ENCODE measurements at regions of chr16 and their contacts with region 1.

Region 1: DNA sequence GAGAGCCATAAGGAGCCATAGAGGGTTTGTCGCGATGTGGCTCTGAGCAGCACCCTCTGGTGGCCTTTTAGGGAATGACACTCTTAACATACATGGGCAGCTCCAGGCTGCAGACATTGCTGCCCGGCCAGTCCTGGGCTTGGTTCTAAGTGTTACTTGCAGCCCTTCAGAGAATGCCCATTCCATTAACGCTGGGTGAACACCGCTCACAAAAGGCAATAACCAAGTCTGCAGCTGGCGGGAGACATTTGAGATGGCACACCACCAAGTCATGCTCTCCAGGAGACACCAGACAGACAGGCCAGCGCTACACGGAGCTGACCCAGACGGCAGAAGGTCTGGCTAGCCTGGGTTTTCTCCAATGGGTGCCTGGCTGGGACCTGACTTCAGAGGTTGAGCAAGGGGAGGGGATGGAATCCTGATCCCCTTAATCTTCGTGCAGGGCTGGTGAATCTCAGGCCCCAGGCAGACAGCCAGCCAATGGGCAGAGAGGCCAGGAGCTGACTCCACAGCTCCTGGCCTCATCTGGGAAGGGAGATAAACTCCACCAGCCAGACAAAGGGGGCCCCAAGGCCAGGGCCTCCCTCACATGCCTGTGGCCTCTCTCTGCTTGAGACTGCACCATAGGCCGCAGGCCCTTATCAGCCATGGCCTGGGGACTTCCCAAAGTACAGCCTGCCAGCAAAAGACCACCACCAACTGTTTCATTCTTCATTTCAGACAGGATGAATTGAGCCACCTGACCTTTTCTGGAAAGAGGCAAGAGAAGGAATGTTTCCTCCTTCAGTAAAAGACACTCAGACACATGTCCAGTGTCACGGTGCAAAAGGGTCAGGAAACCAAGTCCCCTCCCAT is 58.8 kb downstream of the ZDHHC7 start:
- DNase-seq: peak; percentile 69 to 76 (median 73)
- H3K4me3 ChIP-seq: no peak overlapping the region
- H3K4me3 Mint-ChIP-seq: no peak overlapping the region
- H3K27ac ChIP-seq: no peak overlapping the region
- H3K27ac Mint-ChIP-seq: peak overlapping the region in 4 of 7 donors; percentile 25 to 77 (median 58)
- H3K4me1 ChIP-seq: peaks cover 13% of the 10 kb centered on the region
- H3K4me1 Mint-ChIP-seq: peaks cover 0 to 6% (median 5%) of the 10 kb centered on the region in 4 donors
- H3K27me3 ChIP-seq: no peaks in the 10 kb centered on the region
- H3K27me3 Mint-ChIP-seq: peaks cover 0 to 6% of the 10 kb centered on the region in 2 donors

Region 2: GRCh38 chr16:84738255-84739038 is 214.1 kb before region 1 on chr16:
- CTCF ChIA-PET with region 1: interaction called, 24 read pairs
- POLR2A ChIA-PET with region 1: no interaction called
- intact Hi-C with region 1: loop called (anchors 1 kb)
- DNase-seq: peak; percentile 75 to 82 (median 78)
- H3K4me3 ChIP-seq: no peak overlapping the region
- H3K4me3 Mint-ChIP-seq: peak overlapping the region; percentile 27 to 80 (median 64)
- H3K27ac ChIP-seq: no peak overlapping the region
- H3K27ac Mint-ChIP-seq: peak overlapping the region; percentile 2 to 87 (median 80)
- H3K4me1 ChIP-seq: peaks cover 33% of the 10 kb centered on the region
- H3K4me1 Mint-ChIP-seq: peaks cover 36 to 53% (median 43%) of the 10 kb centered on the region in 4 donors
- H3K27me3 ChIP-seq: no peaks in the 10 kb centered on the region
- H3K27me3 Mint-ChIP-seq: no peaks in the 10 kb centered on the region

Region 3: DNA sequence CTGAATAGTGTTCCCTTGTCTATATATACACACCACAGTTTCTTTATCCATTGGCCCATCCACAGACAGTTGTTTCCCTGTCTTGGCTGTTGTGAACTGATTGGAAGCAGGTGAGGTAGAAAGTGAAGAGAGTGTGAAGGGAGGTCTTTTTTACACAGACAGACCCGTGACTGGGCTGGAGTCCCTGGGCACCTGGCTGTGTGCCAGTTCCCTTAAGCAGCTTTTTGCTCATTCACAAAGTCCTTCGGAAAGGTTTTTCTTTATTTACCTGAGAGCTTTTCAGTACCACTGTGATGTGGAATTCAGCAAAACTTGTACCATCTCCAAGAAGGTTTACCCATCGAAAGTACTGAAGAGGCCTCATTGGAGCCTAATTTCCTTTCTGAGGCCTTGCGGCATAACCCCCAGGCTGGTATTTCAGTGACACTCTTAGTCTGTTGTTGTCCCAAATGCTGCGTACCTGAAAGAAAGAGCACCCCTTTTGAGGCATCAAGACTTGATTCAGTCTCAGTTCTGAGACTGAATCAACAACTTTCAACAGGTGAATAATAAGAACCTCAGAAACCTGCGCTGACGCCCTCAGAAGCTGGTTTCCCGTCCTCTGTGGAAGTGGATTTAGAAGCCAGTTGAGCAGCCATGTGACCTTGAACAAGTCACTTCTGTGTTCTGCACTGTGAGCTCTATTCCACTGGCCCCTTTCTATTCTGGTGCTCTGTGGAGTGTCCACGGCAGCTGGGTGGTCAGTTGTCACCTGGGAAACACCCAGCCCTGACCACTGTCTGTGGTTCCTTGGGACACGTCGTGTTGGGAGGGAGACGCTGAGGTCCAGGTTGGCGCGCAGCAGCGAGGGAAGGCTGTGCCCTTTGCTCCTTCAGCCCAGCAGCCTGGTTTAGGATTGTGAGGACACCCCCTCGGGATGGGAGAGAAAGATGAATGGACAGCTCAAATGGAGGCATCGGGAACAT is 186.7 kb before region 1 on chr16:
- CTCF ChIA-PET with region 1: interaction called, 32 read pairs
- POLR2A ChIA-PET with region 1: no interaction called
- intact Hi-C with region 1: no loop called
- DNase-seq: peak; percentile 36 to 65 (median 55)
- H3K4me3 ChIP-seq: no peak overlapping the region
- H3K4me3 Mint-ChIP-seq: peak overlapping the region; percentile 43 to 90 (median 80)
- H3K27ac ChIP-seq: peak overlapping the region; percentile 44
- H3K27ac Mint-ChIP-seq: peak overlapping the region; percentile 85 to 98 (median 95)
- H3K4me1 ChIP-seq: peaks cover 51% of the 10 kb centered on the region
- H3K4me1 Mint-ChIP-seq: peaks cover 46 to 71% (median 58%) of the 10 kb centered on the region in 4 donors
- H3K27me3 ChIP-seq: no peaks in the 10 kb centered on the region
- H3K27me3 Mint-ChIP-seq: no peaks in the 10 kb centered on the region

Region 4: GRCh38 chr16:84925092-84925772 is 27.3 kb before region 1 on chr16:
- CTCF ChIA-PET with region 1: interaction called, 22 read pairs
- POLR2A ChIA-PET with region 1: no interaction called
- intact Hi-C with region 1: loop called (anchors 1 kb)
- DNase-seq: peak; percentile 49 to 56 (median 55)
- H3K4me3 ChIP-seq: no peak overlapping the region
- H3K4me3 Mint-ChIP-seq: no peak overlapping the region
- H3K27ac ChIP-seq: no peak overlapping the region
- H3K27ac Mint-ChIP-seq: no peak overlapping the region
- H3K4me1 ChIP-seq: peaks cover 2% of the 10 kb centered on the region
- H3K4me1 Mint-ChIP-seq: peaks cover 0 to 3% (median under 1%) of the 10 kb centered on the region in 4 donors
- H3K27me3 ChIP-seq: no peaks in the 10 kb centered on the region
- H3K27me3 Mint-ChIP-seq: peaks cover 0 to 2% of the 10 kb centered on the region in 2 donors

Region 5: GRCh38 chr16:84930298-84931106 is 22.1 kb before region 1 on chr16:
- CTCF ChIA-PET with region 1: interaction called, 22 read pairs
- POLR2A ChIA-PET with region 1: no interaction called
- intact Hi-C with region 1: loop called (anchors 1 kb)
- DNase-seq: no peak
- H3K4me3 ChIP-seq: no peak overlapping the region
- H3K4me3 Mint-ChIP-seq: no peak overlapping the region
- H3K27ac ChIP-seq: no peak overlapping the region
- H3K27ac Mint-ChIP-seq: peak overlapping the region in 2 of 7 donors; percentile 2 to 62
- H3K4me1 ChIP-seq: peaks cover 3% of the 10 kb centered on the region
- H3K4me1 Mint-ChIP-seq: peaks cover 0 to 5% (median 2%) of the 10 kb centered on the region in 4 donors
- H3K27me3 ChIP-seq: no peaks in the 10 kb centered on the region
- H3K27me3 Mint-ChIP-seq: no peaks in the 10 kb centered on the region

Region 6: GRCh38 chr16:84963066-84963465 is 10.5 kb after region 1 on chr16:
- CTCF ChIA-PET with region 1: interaction called, 44 read pairs
- POLR2A ChIA-PET with region 1: no interaction called
- intact Hi-C with region 1: no loop called
- DNase-seq: no peak
- H3K4me3 ChIP-seq: no peak overlapping the region
- H3K4me3 Mint-ChIP-seq: no peak overlapping the region
- H3K27ac ChIP-seq: no peak overlapping the region
- H3K27ac Mint-ChIP-seq: no peak overlapping the region
- H3K4me1 ChIP-seq: no peaks in the 10 kb centered on the region
- H3K4me1 Mint-ChIP-seq: no peaks in the 10 kb centered on the region
- H3K27me3 ChIP-seq: no peaks in the 10 kb centered on the region
- H3K27me3 Mint-ChIP-seq: peaks cover 0 to 1% of the 10 kb centered on the region in 2 donors

Region 7: GRCh38 chr16:84970447-84971127 is 18.0 kb after region 1 on chr16:
- CTCF ChIA-PET with region 1: interaction called, 44 read pairs
- POLR2A ChIA-PET with region 1: no interaction called
- intact Hi-C with region 1: no loop called
- DNase-seq: peak; percentile 72 to 81 (median 75)
- H3K4me3 ChIP-seq: no peak overlapping the region
- H3K4me3 Mint-ChIP-seq: peak overlapping the region in 3 of 8 donors; percentile 1 to 41 (median 15)
- H3K27ac ChIP-seq: no peak overlapping the region
- H3K27ac Mint-ChIP-seq: peak overlapping the region in 6 of 7 donors; percentile 22 to 74 (median 64)
- H3K4me1 ChIP-seq: peaks cover 7% of the 10 kb centered on the region
- H3K4me1 Mint-ChIP-seq: peaks cover 4 to 6% (median 5%) of the 10 kb centered on the region in 4 donors
- H3K27me3 ChIP-seq: no peaks in the 10 kb centered on the region
- H3K27me3 Mint-ChIP-seq: no peaks in the 10 kb centered on the region

Region 8: DNA sequence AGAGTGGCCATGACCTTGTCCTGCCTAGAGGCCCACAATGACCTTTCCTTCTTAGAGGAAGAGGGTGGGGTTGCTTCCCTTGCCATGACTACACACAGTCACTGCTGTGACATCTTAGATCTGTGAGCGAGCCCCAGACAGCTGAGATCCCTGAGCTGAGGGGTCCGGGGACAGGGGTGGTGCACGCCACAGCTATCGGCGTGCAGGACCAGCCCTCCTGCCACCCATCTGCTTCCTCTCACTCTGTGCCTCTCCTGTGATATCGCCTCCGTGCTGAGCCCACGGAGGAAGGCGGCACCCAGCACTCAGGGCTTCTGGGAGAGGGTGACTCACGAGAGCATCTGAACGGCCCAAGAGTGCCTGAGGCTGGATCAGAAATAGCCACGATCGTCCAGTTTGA is 110.3 kb after region 1 on chr16:
- CTCF ChIA-PET with region 1: no interaction called
- POLR2A ChIA-PET with region 1: no interaction called
- intact Hi-C with region 1: no loop called
- DNase-seq: no peak
- H3K4me3 ChIP-seq: no peak overlapping the region
- H3K4me3 Mint-ChIP-seq: peak overlapping the region in 1 of 8 donors; percentile 30
- H3K27ac ChIP-seq: no peak overlapping the region
- H3K27ac Mint-ChIP-seq: peak overlapping the region in 2 of 7 donors; percentile 10 to 15
- H3K4me1 ChIP-seq: peaks cover 9% of the 10 kb centered on the region
- H3K4me1 Mint-ChIP-seq: peaks cover 6 to 17% (median 12%) of the 10 kb centered on the region in 4 donors
- H3K27me3 ChIP-seq: no peaks in the 10 kb centered on the region
- H3K27me3 Mint-ChIP-seq: no peaks in the 10 kb centered on the region